Activated CD4-positive, alpha-beta T cell treated with anti-CD3 and anti-CD28 coated beads for 36 hours (primary cell): ENCODE measurements at regions of chr1 and their contacts with region 1.

Region 1: GRCh38 chr1:165073185-165074007 is 283.1 kb downstream of the LMX1A start:
- DNase-seq: no peak
- ATAC-seq: peak; percentile 33
- H3K4me3 Mint-ChIP-seq: no peak overlapping the region
- H3K27ac Mint-ChIP-seq: no peak overlapping the region
- H3K4me1 Mint-ChIP-seq: no peaks in the 10 kb centered on the region
- H3K27me3 Mint-ChIP-seq: no peaks in the 10 kb centered on the region

Region 2: DNA sequence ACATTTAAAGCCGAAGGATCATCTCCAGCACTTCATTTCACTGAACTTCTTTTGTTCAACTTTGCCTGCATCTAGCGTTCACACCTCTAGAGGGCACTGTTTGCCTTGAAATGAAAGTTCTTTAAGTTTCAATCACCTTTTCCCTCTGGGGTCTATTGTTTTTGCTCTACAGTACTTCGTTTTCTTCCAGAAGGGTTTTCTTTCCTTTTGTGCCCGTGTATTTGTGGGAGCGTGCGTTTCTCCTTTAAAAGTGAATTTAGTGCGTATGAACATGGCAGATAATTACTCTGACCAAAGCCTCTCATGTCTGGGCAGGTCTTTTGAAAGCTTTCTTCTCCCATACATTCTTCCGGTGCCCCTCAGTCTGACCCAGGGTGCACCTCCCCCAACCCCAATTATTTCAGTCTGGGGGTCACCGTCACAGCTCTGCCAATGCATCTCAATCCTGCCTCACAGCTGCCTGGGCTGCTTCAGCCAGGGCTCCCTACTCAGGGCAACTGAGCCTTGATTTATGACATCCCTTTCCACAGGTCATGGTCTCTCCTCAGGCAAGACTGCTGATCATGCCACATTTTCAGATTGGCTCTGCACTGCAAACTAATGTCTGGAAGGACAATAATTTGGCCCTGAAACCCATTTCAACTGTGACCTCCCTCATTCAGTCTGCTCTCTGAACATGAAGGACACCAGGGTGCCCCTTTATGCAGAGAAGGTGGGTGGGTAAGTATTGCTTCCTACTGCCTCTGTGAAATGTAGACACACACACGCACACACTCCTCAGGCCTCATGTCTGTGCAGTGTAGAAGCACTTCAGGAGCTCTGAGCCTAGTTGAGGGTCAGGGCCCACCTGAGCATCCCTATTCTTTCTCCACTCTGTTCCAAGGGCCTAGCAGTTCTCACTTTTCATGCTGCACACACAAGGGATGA is 1663.1 kb before region 1 on chr1:
- CTCF ChIA-PET with region 1: interaction called, 4 read pairs
- POLR2A ChIA-PET with region 1: no interaction called
- intact Hi-C with region 1: loop called in 1 of 2 experiments (anchors 5 kb)
- DNase-seq: peak; percentile 56
- ATAC-seq: no peak
- H3K4me3 Mint-ChIP-seq: no peak overlapping the region
- H3K27ac Mint-ChIP-seq: no peak overlapping the region
- H3K4me1 Mint-ChIP-seq: peaks cover 2% of the 10 kb centered on the region
- H3K27me3 Mint-ChIP-seq: peaks cover 14% of the 10 kb centered on the region